Endothelial cell of umbilical vein (primary cell): ENCODE measurements at regions of chr6 and their contacts with region 1.

Region 1: DNA sequence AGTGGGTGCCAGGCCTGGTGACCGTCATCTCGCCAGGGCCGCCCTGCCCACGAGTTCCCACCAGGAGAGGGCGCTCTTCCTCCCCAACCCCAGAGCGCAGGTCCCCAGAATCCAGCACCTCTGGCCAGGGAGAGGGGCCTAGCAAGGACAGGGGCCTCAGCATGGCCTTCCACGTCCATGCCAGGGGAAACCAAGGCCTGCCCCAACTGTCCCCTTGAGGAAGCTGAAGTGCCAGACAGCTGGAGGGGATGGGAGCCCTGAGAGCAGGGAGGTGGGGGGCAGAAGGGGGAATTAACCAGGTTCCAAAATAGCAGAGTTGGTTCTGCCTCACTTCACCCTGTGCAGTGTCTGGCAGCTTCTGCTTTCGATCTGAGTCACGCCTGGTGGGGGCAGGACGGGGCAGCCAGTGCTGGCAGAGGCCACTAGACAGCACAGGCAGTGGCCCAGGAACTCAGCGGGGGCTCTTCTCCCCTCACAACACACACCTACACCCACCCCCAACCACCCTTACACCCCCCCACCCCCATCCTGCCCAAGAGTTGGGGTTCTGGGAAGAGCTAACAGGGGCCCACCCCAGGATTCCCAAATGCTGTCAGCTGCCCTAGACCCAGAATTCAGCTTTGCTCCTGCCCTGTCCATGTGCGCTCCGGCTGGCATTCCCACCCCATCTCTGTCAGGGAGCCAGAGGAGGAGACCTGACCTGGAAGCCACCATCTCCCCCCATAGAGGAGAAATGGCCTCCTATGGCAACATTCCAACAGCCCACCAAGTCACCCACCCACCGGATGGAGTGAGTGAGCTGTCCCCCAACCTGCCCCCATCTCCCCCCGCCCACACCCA is 29.2 kb downstream of the TFEB start:
- DNase-seq: peak; percentile 14
- H3K4me3 ChIP-seq: no peak overlapping the region
- H3K27ac ChIP-seq: no peak overlapping the region
- H3K4me1 ChIP-seq: no peaks in the 10 kb centered on the region
- H3K27me3 ChIP-seq: no peaks in the 10 kb centered on the region
- CTCF ChIP-seq: peak; percentile 47 to 57
- POLR2A ChIP-seq: no peak

Region 2: DNA sequence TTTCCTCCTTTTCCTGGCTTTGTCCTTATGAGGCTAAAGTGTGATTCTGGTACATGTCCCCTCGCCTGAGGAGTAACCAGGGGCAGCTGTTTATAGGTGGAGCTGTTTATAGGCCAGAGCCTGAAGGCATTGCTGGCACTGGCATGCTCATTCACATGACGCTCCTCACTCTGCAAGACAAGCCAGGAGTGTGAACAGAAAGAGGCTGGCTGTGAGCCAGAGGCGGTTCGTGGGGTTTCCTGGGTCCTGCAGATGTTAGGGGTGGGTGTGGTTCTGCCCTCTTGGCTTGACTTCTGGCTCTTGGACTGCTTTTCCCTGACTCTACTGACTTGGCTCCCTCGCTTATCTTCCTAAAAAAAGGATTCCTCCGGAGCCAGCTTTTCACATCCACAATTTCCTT is 80.8 kb before region 1 on chr6:
- CTCF ChIA-PET with region 1: no interaction called
- POLR2A ChIA-PET with region 1: no interaction called
- dilution Hi-C with region 1: no loop called
- intact Hi-C with region 1: no loop called
- DNase-seq: no peak
- H3K4me3 ChIP-seq: no peak overlapping the region
- H3K27ac ChIP-seq: no peak overlapping the region
- H3K4me1 ChIP-seq: peaks cover 25% of the 10 kb centered on the region
- H3K27me3 ChIP-seq: peaks cover 0 to under 1% of the 10 kb centered on the region in 2 experiments
- CTCF ChIP-seq: no peak
- POLR2A ChIP-seq: no peak

Region 3: GRCh38 chr6:41735427-41736356 is 29.5 kb after region 1 on chr6 and contains the start of gene TFEB:
- CTCF ChIA-PET with region 1: interaction called, 13 read pairs
- POLR2A ChIA-PET with region 1: no interaction called
- dilution Hi-C with region 1: no loop called
- intact Hi-C with region 1: loop called (anchors 2 kb)
- DNase-seq: peak; percentile 87
- H3K4me3 ChIP-seq: peak within 1 kb of the TSS; percentile 9 to 70 (median 24)
- H3K27ac ChIP-seq: no peak within 1 kb of the TSS
- H3K4me1 ChIP-seq: peaks cover 15% of the 10 kb centered on the region
- H3K27me3 ChIP-seq: no peaks in the 10 kb centered on the region
- CTCF ChIP-seq: peak; percentile 95 to 99
- POLR2A ChIP-seq: no peak
- total RNA-seq, gene TFEB: 4.9 and 5.5 TPM in 2 replicates